ENCODE measurements at regions of chr15 and their contacts with region 1.

Region 1: GRCh38 chr15:48330855-48331795 is at the start of gene DUT:
- DNase-seq: peak; percentile 72
- ATAC-seq: peak; percentile 79
- H3K4me3 Mint-ChIP-seq: peak within 1 kb of the TSS; percentile 98
- H3K27ac Mint-ChIP-seq: peak within 1 kb of the TSS; percentile 97
- H3K4me1 Mint-ChIP-seq: peaks cover 28% of the 10 kb centered on the region
- H3K27me3 Mint-ChIP-seq: no peaks in the 10 kb centered on the region
- CTCF ChIP-seq: no peak
- total RNA-seq, gene DUT: 75.7 and 81.6 TPM in 2 replicates

Region 2: DNA sequence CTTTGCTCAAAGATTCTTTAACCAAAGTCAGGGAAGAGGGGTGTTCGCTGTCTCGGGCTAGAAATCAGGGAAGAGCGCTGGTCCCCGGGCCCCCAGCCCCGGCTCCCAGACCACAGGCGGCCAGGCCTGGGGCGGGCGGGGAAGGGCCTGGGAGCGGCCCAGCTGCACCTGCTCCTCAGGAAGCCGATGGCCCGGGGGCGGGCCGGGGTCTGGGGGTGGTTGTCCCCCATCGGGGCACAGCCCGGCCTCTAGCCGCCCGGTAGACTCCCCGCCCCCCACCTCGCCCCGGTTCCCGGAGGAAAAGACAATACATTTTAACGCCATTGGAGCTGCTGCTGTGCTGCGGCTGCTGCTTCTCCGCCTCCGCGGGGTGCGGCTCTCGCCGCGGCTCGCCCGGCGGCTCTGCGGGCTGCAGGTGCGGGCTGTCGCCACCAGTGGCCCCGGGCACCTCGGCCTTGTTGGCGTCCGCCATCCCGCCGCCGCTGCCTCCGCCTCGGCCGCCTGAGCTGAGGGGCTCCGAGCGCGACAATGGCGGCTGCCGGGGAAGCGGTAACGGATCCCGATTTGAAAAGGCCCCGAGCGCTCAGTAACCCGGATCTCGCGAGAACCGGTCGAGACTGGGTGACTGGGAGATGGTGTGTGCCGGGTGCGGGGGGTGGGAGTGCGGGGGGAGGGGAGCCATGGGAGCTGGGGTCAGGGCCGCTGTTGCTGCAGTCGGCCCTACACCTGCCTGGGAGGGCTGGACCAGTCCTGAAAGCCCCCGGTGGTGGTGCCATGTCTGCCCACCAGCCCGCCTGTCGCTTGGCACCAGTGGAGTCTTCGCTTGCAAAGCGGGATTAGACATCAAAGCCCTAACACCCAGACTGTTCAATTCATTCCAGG is 153.1 kb before region 1 on chr15 and contains the start of gene MYEF2:
- CTCF ChIA-PET with region 1: no interaction called
- POLR2A ChIA-PET with region 1: interaction called, 3 read pairs
- intact Hi-C with region 1: loop called (anchors 2 kb)
- DNase-seq: peak; percentile 55
- ATAC-seq: peak; percentile 84
- H3K4me3 Mint-ChIP-seq: peak within 1 kb of the TSS; percentile 94
- H3K27ac Mint-ChIP-seq: peak within 1 kb of the TSS; percentile 90
- H3K4me1 Mint-ChIP-seq: peaks cover 18% of the 10 kb centered on the region
- H3K27me3 Mint-ChIP-seq: peaks cover 13% of the 10 kb centered on the region
- CTCF ChIP-seq: no peak
- total RNA-seq, gene MYEF2: 19.7 and 23.1 TPM in 2 replicates

Region 3: DNA sequence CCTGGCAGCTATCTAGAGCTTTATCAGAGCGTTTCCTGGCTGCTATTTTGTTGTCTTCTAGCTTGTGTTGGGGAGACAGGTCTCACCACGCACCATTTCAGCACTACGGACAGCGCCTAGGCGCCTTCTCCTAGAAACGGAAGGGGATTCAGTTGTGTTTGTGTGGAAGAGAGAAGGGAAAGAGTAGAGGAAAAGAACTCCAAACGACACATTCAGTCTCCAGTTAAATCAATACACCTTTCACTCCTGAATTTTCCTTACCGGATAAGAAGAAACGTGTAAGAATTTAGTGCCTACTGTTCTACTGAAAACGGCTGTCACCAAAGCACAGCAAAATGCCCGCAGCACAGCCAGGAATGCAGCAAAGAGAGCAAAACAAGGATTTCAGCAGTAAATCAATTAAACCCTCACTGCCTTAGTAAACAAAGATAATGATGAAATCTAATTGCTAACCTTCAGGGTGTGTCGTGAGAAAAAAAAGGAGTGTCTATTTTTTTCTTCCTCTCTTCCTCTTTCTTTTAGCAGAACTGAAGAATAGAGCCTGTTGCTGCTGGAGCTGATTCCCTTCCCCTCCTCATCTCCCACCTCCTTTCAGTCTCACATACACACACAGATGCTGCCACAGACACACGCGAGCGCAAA is 140.1 kb before region 1 on chr15:
- CTCF ChIA-PET with region 1: no interaction called
- POLR2A ChIA-PET with region 1: no interaction called
- intact Hi-C with region 1: loop called (anchors 5 kb)
- DNase-seq: no peak
- ATAC-seq: no peak
- H3K4me3 Mint-ChIP-seq: no peak overlapping the region
- H3K27ac Mint-ChIP-seq: no peak overlapping the region
- H3K4me1 Mint-ChIP-seq: peaks cover 3% of the 10 kb centered on the region
- H3K27me3 Mint-ChIP-seq: peaks cover 19% of the 10 kb centered on the region
- CTCF ChIP-seq: no peak

Region 4: DNA sequence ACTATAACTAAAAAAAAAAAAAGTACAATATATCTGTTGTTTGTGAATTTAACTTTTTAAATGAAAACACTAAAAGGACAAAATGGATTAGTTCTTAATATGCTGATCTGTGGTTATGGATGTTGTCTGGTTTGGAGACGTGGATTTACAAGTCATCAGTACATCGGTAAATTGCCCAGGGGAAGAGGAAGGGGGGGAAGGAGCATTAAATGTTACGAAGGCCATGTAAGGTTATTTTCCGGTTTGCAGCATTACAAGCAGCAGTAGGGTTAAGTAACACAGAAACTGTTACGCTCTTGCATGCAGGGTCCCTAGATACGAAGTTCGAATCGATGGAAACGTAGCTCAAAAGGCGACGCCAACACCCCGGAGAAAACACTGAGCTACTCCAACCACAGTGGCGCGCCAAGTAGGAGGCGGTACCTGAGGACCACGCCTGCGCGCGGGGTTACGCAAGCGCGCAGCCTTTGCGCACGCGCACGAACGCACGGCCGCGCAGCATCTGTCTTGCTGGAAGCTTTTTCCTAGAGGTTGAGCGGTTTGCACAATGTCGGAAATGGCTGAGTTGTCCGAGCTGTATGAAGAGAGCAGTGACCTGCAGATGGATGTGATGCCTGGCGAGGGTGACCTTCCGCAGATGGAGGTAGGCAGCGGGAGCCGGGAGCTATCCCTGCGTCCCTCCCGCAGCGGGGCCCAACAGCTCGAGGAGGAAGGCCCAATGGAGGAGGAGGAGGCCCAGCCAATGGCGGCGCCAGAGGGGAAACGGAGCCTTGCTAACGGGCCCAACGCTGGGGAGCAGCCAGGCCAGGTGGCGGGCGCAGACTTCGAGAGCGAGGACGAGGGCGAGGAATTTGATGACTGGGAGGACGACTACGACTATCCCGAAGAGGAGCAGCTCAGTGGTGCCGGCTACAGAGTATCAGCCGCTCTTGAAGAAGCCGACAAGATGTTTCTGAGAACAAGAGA is 546.8 kb after region 1 on chr15 and contains the start of gene EID1:
- CTCF ChIA-PET with region 1: no interaction called
- POLR2A ChIA-PET with region 1: no interaction called
- intact Hi-C with region 1: loop called (anchors 10 kb)
- DNase-seq: peak; percentile 90
- ATAC-seq: peak; percentile 95
- H3K4me3 Mint-ChIP-seq: peak within 1 kb of the TSS; percentile 99
- H3K27ac Mint-ChIP-seq: peak within 1 kb of the TSS; percentile 97
- H3K4me1 Mint-ChIP-seq: peaks cover 27% of the 10 kb centered on the region
- H3K27me3 Mint-ChIP-seq: peaks cover 3% of the 10 kb centered on the region
- CTCF ChIP-seq: no peak
- total RNA-seq, gene EID1: 51.3 and 54.4 TPM in 2 replicates

Region 5: DNA sequence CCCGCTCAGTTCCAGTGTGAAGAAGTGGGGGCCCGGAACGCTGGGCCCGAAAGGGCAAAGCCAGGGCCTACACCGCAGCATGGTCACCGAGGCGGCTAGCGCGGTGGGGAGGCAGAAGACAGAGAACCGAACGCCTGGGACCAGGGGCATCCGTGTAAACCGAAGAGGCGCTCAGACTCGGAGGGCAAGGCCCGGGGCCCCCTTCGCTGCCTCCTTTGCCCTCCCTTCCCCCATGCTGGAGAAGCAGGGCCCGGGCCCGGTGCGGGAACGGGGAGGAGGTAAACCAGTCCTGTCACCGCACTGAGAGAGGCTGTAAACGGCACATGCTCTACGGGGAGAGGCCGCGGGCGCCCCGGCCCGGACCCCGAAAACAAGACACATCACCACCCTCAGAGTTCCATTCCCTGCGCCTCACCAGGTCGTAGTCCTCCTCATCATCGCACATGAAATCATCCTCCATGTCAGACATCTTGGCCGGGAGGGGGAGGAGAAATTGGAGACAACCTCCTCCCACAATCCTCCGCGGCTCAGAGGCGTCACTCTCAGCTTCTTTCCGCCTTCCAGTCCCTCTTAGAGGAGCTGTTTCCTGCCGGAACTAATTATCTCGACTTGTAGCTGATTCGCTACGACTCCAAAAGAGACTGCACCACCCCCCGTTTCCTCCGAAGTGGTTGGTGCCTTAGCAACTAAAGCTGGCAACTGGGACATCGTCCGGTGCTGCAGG is 824.1 kb after region 1 on chr15 and contains the start of gene COPS2:
- CTCF ChIA-PET with region 1: no interaction called
- POLR2A ChIA-PET with region 1: no interaction called
- intact Hi-C with region 1: loop called (anchors 2 kb)
- DNase-seq: peak; percentile 78
- ATAC-seq: peak; percentile 93
- H3K4me3 Mint-ChIP-seq: peak within 1 kb of the TSS; percentile 95
- H3K27ac Mint-ChIP-seq: peak within 1 kb of the TSS; percentile 95
- H3K4me1 Mint-ChIP-seq: peaks cover 43% of the 10 kb centered on the region
- H3K27me3 Mint-ChIP-seq: no peaks in the 10 kb centered on the region
- CTCF ChIP-seq: no peak
- total RNA-seq, gene COPS2: 53.1 and 54.4 TPM in 2 replicates